PC-3 (cell line): ENCODE measurements at regions of chr17 and their contacts with region 1.

Region 1: DNA sequence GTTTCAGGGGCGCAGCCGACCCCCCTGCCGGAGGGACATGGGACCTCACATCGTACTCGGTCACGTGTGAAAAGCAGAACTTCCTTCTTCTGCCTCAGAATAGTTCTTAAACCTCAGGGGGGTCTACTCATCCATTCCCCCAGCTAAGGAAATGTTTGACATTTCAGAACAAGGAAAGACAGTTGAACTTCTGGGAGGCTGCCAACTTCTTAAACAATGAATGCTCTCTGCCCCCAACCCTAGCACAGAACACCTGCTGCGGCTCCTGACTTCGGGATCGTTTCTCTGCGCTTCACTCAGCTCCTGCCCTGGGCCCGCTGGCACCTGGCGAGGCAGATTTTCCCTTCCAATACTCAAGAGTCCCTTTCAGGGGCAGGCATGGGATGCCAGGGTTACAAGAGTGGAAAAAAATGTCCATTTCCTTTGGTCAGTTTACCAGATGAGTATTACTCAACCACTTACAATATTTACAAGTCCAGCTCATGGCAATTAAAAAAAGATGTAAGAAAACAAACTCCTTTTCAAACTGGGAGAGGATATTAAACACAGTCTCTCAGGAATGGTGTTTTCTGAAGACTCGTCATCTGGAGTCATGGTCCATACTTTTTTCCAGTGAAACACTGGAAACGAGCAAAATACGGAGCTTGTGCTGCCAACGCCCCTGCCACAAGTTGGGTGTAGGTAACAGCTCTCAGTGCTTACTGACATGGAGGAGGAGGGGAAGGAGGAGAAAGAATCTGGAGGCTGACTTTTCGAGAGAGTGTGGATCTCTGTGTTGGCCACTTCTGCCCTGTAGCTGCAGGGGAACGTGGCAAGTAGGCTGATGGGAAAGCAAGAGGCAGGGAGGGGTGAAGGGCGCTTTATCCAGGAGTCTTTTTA is 235.7 kb downstream of the NTN1 start:
- DNase-seq: peak; percentile 59
- ATAC-seq: peak; percentile 81
- H3K4me3 ChIP-seq: no peak overlapping the region
- H3K27ac ChIP-seq: peak overlapping the region; percentile 56
- H3K4me1 ChIP-seq: peaks cover 27% of the 10 kb centered on the region
- H3K27me3 ChIP-seq: no peaks in the 10 kb centered on the region
- CTCF ChIP-seq: no peak

Region 2: GRCh38 chr17:9330612-9331271 is 73.8 kb after region 1 on chr17:
- CTCF ChIA-PET with region 1: no interaction called
- POLR2A ChIA-PET with region 1: no interaction called
- intact Hi-C with region 1: no loop called
- DNase-seq: no peak
- ATAC-seq: no peak
- H3K4me3 ChIP-seq: no peak overlapping the region
- H3K27ac ChIP-seq: no peak overlapping the region
- H3K4me1 ChIP-seq: no peaks in the 10 kb centered on the region
- H3K27me3 ChIP-seq: no peaks in the 10 kb centered on the region
- CTCF ChIP-seq: no peak

Region 3: DNA sequence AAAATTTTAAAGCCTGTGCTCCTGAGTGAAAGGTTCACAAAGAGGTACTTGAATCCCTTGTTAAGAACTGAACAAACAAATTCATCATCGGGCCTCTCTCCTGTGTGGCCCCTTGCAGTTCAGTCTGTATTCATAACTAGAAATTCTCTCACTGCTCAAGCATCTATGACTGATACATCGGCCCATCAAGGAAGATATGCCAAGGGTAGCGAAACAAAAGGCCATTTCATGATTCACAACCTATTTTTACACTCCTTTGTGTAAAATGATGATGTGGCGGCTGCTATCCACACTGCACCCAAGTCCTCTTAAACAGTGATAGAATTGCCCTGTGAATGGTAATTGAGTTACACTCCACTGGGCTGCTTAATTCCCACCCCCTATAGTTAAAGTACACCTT is 114.0 kb after region 1 on chr17:
- CTCF ChIA-PET with region 1: no interaction called
- POLR2A ChIA-PET with region 1: no interaction called
- intact Hi-C with region 1: loop called (anchors 10 kb)
- DNase-seq: peak; percentile 76
- ATAC-seq: peak; percentile 94
- H3K4me3 ChIP-seq: no peak overlapping the region
- H3K27ac ChIP-seq: peak overlapping the region; percentile 89
- H3K4me1 ChIP-seq: peaks cover 19% of the 10 kb centered on the region
- H3K27me3 ChIP-seq: no peaks in the 10 kb centered on the region
- CTCF ChIP-seq: no peak